ENCODE measurements at regions of chr10 and their contacts with region 1.

Region 1: DNA sequence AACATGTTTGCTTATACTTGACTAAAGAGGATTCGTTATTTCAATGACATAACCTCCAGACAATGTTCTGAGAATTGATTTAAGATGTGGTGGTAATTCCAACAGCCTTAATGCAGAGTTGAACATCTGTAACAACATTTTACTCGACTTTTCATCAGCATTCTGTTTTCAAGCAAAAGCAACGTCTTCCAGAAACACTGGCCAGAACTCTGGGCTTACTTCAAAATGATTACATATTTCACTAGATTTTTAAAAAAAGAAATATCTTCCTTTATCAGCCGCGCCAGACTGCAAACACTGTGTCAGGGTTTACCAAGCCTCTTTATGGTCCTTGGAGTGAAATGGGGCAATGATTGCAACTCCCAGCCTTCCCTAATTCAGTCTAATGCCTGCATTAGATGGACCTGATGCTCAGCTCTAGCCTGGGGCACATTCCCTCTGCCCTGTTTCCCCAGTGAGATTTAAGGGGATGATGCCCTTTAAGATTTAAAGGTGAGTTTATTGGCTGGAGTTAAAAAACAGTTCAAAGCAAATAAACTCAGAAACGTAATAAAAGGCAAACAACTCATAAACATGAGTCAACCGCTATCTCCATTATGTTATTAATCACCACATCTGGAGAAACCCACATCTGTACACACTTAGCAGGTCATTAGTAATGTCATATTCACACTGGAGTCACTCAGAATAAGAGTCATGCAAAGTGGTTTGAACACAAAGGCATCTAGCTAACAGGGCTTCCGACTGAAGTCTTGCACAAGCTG is 663.9 kb downstream of the KCNMA1 start:
- DNase-seq: peak; percentile 99
- ATAC-seq: peak; percentile 95
- H3K4me3 ChIP-seq: no peak overlapping the region
- H3K27ac ChIP-seq: 0 out of 2 replicates have a peak overlapping the region, but pooled peaks have one; percentile 1
- H3K4me1 ChIP-seq: peaks cover 20% of the 10 kb centered on the region
- H3K27me3 ChIP-seq: no peaks in the 10 kb centered on the region
- CTCF ChIP-seq: no peak

Region 2: DNA sequence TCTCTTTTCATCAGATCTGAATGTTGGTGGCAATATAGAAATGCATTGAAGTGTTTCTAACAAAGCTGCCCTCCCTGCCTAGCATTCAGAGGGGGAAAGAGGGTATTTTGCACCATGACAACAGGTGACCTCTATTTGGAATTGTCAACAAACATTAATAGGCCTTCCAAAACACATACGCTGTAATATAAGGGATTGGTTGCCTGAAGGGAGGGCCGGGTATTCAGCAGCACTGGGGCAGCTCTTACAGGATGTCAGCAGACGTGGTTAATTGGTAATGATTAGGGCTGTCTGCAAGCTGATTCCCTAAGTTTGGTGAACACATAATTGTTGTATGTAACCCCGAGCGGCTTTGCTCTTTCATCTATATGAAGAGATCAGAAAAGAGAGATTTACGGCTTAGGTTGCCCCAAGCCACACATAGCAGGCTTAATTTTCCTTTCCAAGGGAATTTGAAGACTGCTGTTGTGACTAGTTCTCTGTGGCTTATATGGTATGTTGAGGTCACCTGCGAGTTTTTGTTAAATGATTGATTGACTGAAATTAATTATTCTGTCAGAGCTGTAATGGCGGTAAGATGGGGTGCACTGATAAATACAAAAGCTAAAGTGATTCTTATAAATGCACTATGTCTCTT is 782.9 kb before region 1 on chr10:
- CTCF ChIA-PET with region 1: no interaction called
- POLR2A ChIA-PET with region 1: no interaction called
- intact Hi-C with region 1: loop called (anchors 5 kb)
- DNase-seq: no peak
- ATAC-seq: no peak
- H3K4me3 ChIP-seq: no peak overlapping the region
- H3K27ac ChIP-seq: no peak overlapping the region
- H3K4me1 ChIP-seq: no peaks in the 10 kb centered on the region
- H3K27me3 ChIP-seq: peaks cover 90% of the 10 kb centered on the region
- CTCF ChIP-seq: no peak

Region 3: GRCh38 chr10:76736815-76737618 is 236.7 kb before region 1 on chr10:
- CTCF ChIA-PET with region 1: no interaction called
- POLR2A ChIA-PET with region 1: no interaction called
- intact Hi-C with region 1: loop called (anchors 5 kb)
- DNase-seq: no peak
- ATAC-seq: no peak
- H3K4me3 ChIP-seq: no peak overlapping the region
- H3K27ac ChIP-seq: no peak overlapping the region
- H3K4me1 ChIP-seq: no peaks in the 10 kb centered on the region
- H3K27me3 ChIP-seq: peaks cover 83% of the 10 kb centered on the region
- CTCF ChIP-seq: no peak

Region 4: GRCh38 chr10:76922666-76923065 is 51.0 kb before region 1 on chr10:
- CTCF ChIA-PET with region 1: no interaction called
- POLR2A ChIA-PET with region 1: no interaction called
- intact Hi-C with region 1: loop called (anchors 2 kb)
- DNase-seq: no peak
- ATAC-seq: peak; percentile 50
- H3K4me3 ChIP-seq: no peak overlapping the region
- H3K27ac ChIP-seq: no peak overlapping the region
- H3K4me1 ChIP-seq: no peaks in the 10 kb centered on the region
- H3K27me3 ChIP-seq: no peaks in the 10 kb centered on the region
- CTCF ChIP-seq: no peak

Region 5: DNA sequence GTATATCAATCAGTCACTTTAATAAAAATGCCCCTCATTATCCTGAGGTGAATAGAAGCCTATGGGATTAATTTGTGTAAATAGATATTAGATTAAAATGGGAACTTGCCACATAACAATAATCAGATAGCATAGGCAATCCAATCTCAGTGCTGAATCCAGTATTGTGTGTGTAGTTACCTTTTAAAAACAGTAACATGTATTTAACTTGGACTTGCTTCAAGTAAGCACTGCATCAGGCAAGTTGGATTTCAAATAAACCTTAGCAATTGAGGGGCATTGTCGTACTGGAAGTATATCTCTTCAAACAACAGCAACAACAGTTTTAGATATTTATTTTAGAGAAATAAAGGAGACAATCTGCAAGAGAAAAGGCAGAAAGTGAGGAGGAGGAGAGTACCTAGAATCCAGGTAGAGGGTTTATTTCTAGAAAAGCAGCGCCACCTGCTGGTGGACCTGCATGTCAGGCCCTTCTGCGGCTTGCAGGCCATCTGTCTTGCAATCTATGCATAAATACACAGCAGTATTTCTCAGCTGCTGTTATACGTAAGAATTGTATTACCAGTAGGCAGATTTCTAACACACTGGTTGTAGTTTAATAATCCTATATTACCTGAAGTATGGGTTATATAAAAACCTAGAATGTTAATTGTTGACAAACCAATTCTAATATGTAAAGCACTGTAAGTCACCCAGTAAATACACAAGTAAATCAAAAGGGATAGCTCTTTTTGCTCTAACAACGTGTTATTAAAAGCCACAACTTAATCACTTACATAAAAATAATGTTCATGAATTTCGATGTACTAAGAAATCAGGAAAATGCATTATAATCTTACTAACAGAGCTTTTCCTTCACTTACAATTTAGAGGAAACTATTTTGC is 11.1 kb after region 1 on chr10:
- CTCF ChIA-PET with region 1: interaction called, 13 read pairs
- POLR2A ChIA-PET with region 1: interaction called, 14 read pairs
- intact Hi-C with region 1: loop called (anchors 1 kb)
- DNase-seq: peak; percentile 100
- ATAC-seq: peak; percentile 95
- H3K4me3 ChIP-seq: no peak overlapping the region
- H3K27ac ChIP-seq: no peak overlapping the region
- H3K4me1 ChIP-seq: peaks cover 18% of the 10 kb centered on the region
- H3K27me3 ChIP-seq: no peaks in the 10 kb centered on the region
- CTCF ChIP-seq: peak; percentile 100

Region 6: DNA sequence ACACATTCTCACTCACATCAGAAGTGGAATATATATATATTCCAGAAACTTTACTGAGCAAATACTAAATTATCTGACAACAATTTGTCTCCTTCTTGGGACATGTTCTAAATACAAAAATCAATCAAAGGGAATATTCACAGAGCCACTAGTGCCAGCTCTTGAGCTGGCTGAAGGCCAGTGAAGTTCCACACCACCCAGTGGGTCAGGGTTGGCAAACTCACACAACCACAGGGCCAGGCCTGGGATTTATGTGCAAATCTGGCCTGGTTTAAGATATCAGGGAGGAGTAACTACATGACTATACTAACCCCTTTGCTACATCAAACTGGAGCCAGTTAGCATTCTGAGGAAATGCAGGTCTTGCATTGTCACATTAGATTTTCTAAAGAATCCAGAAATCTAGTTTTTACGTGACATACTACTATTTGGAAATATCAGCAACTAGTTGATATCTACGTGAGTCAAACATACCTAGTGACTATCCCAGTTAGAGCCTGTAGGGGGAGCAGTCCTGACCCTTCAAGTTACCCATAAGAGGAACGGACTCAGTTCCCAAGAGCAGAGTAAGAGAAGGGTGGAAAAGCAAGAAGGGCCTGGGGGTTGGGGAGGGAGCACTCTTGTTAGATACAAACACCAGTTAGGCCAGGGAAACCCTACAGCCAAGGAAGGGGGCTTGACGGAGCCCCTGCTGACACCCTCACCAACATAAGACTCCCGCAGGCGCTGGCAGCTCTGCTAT is 63.5 kb after region 1 on chr10:
- CTCF ChIA-PET with region 1: no interaction called
- POLR2A ChIA-PET with region 1: no interaction called
- intact Hi-C with region 1: loop called (anchors 5 kb)
- DNase-seq: peak; percentile 74
- ATAC-seq: 0 out of 2 replicates have a peak, but pooled peaks have one; percentile 8
- H3K4me3 ChIP-seq: no peak overlapping the region
- H3K27ac ChIP-seq: no peak overlapping the region
- H3K4me1 ChIP-seq: peaks cover 7% of the 10 kb centered on the region
- H3K27me3 ChIP-seq: no peaks in the 10 kb centered on the region
- CTCF ChIP-seq: peak; percentile 100